Right cardiac atrium (tissue), 5 donors: ENCODE measurements at regions of chr18 and their contacts with region 1.

Region 1: GRCh38 chr18:26548429-26549262 is at the start of gene KCTD1:
- DNase-seq: peak; percentile 89 to 94 (median 93)
- ATAC-seq: peak; percentile 72
- H3K4me3 ChIP-seq: peak within 1 kb of the TSS; percentile 92
- H3K27ac ChIP-seq: peak within 1 kb of the TSS; percentile 82
- H3K4me1 ChIP-seq: peaks cover 9% of the 10 kb centered on the region
- H3K27me3 ChIP-seq: no peaks in the 10 kb centered on the region
- total RNA-seq, gene KCTD1: 45.2 to 51.8 (median 49.4) TPM

Region 2: DNA sequence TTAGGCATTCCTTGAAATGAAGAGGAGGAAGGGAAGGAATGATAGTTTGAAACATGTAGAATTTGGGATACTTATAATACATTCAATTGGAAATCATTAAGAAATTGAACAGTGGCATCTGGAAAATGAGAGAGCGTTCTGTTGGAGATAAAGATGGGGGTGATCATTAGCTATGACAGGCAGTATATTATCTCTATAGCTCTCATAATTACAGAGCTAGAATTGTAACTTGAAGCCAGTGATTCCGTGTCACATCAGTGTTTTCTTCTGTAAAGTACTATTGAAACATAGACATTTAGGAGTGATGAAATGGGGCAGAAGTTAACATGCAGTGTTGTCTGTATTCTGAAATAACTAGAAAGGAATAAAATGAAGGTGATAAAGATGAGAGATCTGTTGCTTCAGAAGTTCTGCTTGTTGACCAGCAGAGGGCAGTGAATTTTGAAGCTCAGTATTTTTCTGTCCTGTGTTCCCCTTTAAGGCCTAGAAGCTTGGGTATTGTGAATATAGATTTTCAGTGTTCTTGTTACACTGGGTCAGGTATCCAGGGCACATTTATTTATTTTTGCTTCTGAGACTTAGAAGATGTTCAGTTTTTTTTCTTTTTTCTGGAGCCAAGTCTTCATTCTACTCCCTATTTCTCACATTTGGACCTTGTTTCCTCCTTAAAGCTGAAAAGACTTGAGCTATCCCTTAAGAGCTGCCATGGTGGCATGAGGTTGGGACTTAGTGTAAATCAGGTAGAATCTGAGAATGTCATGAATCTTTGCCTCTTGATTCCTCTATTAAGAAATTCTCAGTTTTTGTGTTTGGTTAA is 165.0 kb before region 1 on chr18:
- intact Hi-C with region 1: no loop called
- DNase-seq: no peak
- ATAC-seq: peak; percentile 44 to 54
- H3K4me3 ChIP-seq: no peak overlapping the region
- H3K27ac ChIP-seq: no peak overlapping the region
- H3K4me1 ChIP-seq: peaks cover 2% of the 10 kb centered on the region
- H3K27me3 ChIP-seq: no peaks in the 10 kb centered on the region

Region 3: GRCh38 chr18:26460449-26461091 is 88.1 kb before region 1 on chr18:
- intact Hi-C with region 1: loop called in 1 of 4 experiments (anchors 5 kb)
- DNase-seq: peak; percentile 34 to 77 (median 77)
- ATAC-seq: peak; percentile 85
- H3K4me3 ChIP-seq: no peak overlapping the region
- H3K27ac ChIP-seq: peak overlapping the region; percentile 55
- H3K4me1 ChIP-seq: peaks cover 7% of the 10 kb centered on the region
- H3K27me3 ChIP-seq: no peaks in the 10 kb centered on the region

Region 4: GRCh38 chr18:26511339-26512071 is 37.1 kb before region 1 on chr18:
- intact Hi-C with region 1: loop called in 1 of 4 experiments (anchors 5 kb)
- DNase-seq: no peak
- ATAC-seq: peak; percentile 60 to 68
- H3K4me3 ChIP-seq: no peak overlapping the region
- H3K27ac ChIP-seq: peak overlapping the region; percentile 93
- H3K4me1 ChIP-seq: peaks cover 11% of the 10 kb centered on the region
- H3K27me3 ChIP-seq: no peaks in the 10 kb centered on the region

Region 5: GRCh38 chr18:26656944-26657536 is 108.4 kb after region 1 on chr18:
- intact Hi-C with region 1: loop called in 1 of 4 experiments (anchors 5 kb)
- DNase-seq: peak; percentile 90 to 95 (median 94)
- ATAC-seq: peak; percentile 96 to 97
- H3K4me3 ChIP-seq: peak overlapping the region; percentile 99
- H3K27ac ChIP-seq: peak overlapping the region; percentile 97
- H3K4me1 ChIP-seq: no peaks in the 10 kb centered on the region
- H3K27me3 ChIP-seq: no peaks in the 10 kb centered on the region